Activated T-helper 1 cell treated with anti-CD3 and anti-CD28 coated beads, Interleukin-12 subunit alpha, Interleukin-12 subunit beta, Interleukin-2, Interleukin-4 antibody, amounts not matched to agents 30 ng/mL and 10 ng/mL and 1 ng/mL, durations not matched to agents 14 hours and 24 hours and 36 hours (primary cell): ENCODE measurements at regions of chr1 and their contacts with region 1.

Region 1: DNA sequence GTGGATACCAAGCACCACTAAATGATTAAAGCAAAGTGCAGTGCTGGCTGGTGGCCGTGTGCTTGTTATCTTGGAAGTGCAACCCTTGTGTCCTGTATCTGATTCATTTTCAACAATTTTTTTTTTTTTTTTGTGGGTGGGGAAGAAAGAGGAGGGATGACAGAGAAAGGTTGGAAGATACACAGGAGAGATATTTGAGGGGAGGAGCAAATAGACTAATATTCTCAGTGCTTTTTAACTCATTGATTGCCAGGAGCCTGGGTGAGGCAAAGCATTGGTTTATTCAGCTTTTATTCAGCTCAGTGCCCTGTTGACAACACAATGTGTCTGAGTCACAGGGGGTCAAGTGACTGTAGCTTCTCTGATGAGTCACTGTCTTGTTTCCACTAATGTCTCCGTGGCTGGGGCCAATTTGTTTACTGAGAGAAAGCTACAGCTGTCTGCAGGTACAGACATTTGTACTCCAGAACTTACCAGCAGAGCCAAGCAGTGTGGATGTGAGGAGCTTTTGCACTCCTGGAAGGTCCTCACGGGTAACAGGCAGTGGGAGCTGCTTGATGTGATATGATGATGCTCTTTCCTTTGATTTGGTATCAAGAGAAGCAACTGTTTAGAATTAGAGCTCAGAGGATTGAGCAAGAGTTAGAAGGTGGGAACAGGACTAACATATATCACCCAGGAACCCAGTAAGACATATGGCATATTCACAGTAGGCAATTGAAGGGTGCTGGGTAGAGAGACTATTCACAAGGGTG is 23.6 kb upstream of the DNM3 start:
- DNase-seq: peak; percentile 31
- H3K4me3 Mint-ChIP-seq: peak overlapping the region; percentile 61
- H3K27ac Mint-ChIP-seq: peak overlapping the region; percentile 90
- H3K4me1 Mint-ChIP-seq: peaks cover 31% of the 10 kb centered on the region
- H3K27me3 Mint-ChIP-seq: no peaks in the 10 kb centered on the region

Region 2: DNA sequence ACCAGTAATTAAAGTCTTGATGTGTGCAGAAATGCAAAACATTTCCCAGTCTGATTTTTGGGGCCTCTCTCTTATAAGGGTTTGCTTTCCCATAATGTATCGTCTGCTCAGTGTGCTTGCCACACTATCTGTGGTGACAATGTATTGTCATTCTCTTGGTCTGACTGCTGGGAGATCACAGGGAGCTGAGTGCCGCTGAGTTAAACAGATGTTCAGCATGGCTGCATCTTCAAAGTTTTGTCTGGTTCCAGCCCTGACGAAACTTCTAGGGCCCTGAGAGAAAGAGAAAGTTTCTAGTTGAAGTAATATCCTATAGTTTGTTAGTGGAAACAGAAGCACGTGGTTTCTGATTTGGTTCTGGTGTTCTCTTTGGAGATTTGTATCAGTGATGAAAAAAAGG is 66.2 kb after region 1 on chr1:
- intact Hi-C with region 1: loop called (anchors 5 kb)
- DNase-seq: no peak
- H3K4me3 Mint-ChIP-seq: no peak overlapping the region
- H3K27ac Mint-ChIP-seq: no peak overlapping the region
- H3K4me1 Mint-ChIP-seq: peaks cover 13% of the 10 kb centered on the region
- H3K27me3 Mint-ChIP-seq: no peaks in the 10 kb centered on the region

Region 3: DNA sequence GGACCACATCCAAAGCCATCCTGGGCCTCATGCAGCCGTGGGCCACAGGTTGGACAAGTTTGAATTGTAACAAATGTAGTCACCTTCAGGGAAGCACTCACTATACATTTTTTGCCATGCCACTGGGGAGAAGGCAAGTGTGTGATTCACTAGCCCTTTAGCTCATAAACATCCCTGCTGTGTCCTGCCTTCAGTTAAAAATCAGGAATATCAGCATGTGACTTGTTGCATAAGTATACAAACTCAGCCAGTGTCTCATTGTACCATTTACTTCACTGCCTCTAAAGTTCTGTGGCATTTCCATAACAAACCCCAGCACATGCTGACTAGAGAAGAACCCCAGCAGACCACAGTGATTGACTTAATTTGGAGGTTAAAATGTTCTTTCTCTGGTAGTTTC is 460.8 kb after region 1 on chr1:
- intact Hi-C with region 1: loop called (anchors 10 kb)
- DNase-seq: no peak
- H3K4me3 Mint-ChIP-seq: no peak overlapping the region
- H3K27ac Mint-ChIP-seq: no peak overlapping the region
- H3K4me1 Mint-ChIP-seq: peaks cover 22% of the 10 kb centered on the region
- H3K27me3 Mint-ChIP-seq: no peaks in the 10 kb centered on the region

Region 4: GRCh38 chr1:172561252-172561651 is 743.6 kb after region 1 on chr1:
- intact Hi-C with region 1: no loop called
- DNase-seq: no peak
- H3K4me3 Mint-ChIP-seq: no peak overlapping the region
- H3K27ac Mint-ChIP-seq: no peak overlapping the region
- H3K4me1 Mint-ChIP-seq: peaks cover 12% of the 10 kb centered on the region
- H3K27me3 Mint-ChIP-seq: no peaks in the 10 kb centered on the region